GM13976 (cell line): ENCODE measurements at regions of chr5 and their contacts with region 1.

Region 1: DNA sequence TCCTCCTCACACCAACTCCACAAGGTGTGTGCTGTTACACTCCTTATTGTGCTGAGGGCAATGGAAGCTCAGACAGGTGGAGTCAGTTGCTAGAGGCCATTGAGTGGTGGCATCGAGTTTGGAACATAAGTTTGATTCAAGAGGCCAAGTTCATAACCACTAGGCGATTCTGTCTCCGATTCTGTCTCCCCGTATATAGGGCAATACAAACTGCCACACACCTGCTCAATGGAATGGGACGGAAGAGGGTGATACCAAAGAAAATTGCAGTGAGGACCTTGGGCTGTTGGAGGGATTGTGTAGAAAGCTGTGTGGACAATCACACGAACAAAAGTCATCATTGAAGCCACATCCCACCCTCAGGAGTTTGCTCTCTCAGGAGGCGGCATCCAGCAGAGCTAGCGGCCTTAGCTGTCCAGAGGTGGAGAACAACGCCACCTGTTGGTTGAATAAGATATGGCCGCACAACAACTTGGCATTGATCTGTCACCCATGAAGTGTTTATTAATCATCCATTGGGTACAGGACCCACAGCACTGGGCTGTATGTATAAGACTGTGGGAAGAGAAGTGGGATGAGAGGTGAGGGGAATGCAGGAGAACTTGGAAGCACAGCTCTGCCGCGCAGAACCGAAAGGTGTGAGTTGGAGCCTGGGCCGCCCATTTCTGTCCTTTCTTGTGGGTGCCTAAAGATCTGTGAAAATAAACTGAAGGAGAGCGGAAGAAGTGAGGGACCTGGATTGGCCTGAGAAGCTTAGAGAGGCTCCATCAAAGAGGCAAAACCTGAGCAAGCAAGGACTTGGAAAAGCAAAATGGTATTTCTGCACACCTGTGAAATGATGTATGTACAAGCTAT is 16.1 kb upstream of the NEUROG1 start:
- DNase-seq: peak; percentile 76
- CTCF ChIP-seq: peak; percentile 69

Region 2: GRCh38 chr5:135466178-135467050 is 85.4 kb before region 1 on chr5:
- in situ Hi-C with region 1: loop called (anchors 5 kb)
- DNase-seq: peak; percentile 87
- CTCF ChIP-seq: peak; percentile 87

Region 3: GRCh38 chr5:135714126-135714894 is 162.5 kb after region 1 on chr5:
- in situ Hi-C with region 1: no loop called
- DNase-seq: no peak
- CTCF ChIP-seq: no peak